AG04450 (cell line): ENCODE measurements at regions of chr19 and their contacts with region 1.

Region 1: DNA sequence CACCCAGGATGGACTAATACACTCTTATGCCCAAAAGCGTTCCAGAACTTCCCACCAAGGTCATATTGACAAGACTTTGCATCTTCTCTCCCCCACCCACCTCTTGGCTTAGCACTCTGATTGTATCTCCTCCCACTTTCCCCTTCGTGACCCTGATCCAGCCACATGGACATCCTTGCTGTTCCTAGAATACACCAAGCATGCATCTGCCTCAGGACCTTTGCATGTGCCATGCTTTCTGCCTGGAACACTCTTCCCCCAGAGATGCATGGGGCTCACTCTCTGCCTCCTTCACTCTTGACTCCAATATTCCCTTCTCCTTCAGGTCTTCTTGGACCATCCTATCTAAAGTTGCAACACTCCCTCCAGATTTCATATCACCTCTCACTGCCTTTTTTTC is 16.2 kb upstream of the LAIR1 start:
- DNase-seq: no peak
- H3K4me3 ChIP-seq: no peak overlapping the region
- H3K27ac ChIP-seq: no peak overlapping the region
- H3K27me3 ChIP-seq: no peaks in the 10 kb centered on the region
- CTCF ChIP-seq: no peak

Region 2: GRCh38 chr19:54390942-54391577 is 10.2 kb after region 1 on chr19:
- CTCF ChIA-PET with region 1: interaction called, 13 read pairs
- POLR2A ChIA-PET with region 1: no interaction called
- DNase-seq: peak; percentile 16
- H3K4me3 ChIP-seq: no peak overlapping the region
- H3K27ac ChIP-seq: no peak overlapping the region
- H3K27me3 ChIP-seq: peaks cover 5% of the 10 kb centered on the region
- CTCF ChIP-seq: peak; percentile 74